ENCODE measurements at regions of chr1 and their contacts with region 1.

Region 1: GRCh38 chr1:32228771-32229170 is 6.6 kb downstream of the EIF3I start:
- DNase-seq: no peak
- H3K4me3 Mint-ChIP-seq: no peak overlapping the region
- H3K27ac Mint-ChIP-seq: no peak overlapping the region
- H3K4me1 Mint-ChIP-seq: peaks cover 19% of the 10 kb centered on the region
- H3K27me3 Mint-ChIP-seq: no peaks in the 10 kb centered on the region

Region 2: DNA sequence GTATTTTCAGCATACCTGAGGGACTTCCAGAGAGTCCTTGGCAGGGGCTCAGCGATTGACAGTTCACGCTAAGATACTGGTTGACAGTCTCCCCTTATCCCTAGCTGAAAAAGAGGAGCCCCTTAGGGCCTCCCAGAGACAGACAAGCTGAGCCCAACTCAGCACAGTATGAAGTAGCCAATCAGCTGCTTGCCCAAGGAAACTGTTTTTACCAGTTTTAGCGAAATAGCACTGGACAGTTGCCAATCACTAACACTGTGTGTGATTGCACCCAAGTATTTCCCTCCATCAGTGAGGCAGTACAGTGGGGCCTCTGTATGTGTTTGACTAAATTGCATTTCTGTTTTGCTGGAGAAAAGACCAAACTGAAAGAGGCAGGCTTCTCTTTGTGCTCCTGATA is 188.1 kb before region 1 on chr1:
- CTCF ChIA-PET with region 1: no interaction called
- intact Hi-C with region 1: no loop called
- DNase-seq: no peak
- H3K4me3 Mint-ChIP-seq: no peak overlapping the region
- H3K27ac Mint-ChIP-seq: peak overlapping the region; percentile 53
- H3K4me1 Mint-ChIP-seq: peaks cover 3% of the 10 kb centered on the region
- H3K27me3 Mint-ChIP-seq: no peaks in the 10 kb centered on the region

Region 3: GRCh38 chr1:32240140-32240951 is 11.6 kb after region 1 on chr1:
- CTCF ChIA-PET with region 1: interaction called, 13 read pairs
- intact Hi-C with region 1: no loop called
- DNase-seq: peak; percentile 72
- H3K4me3 Mint-ChIP-seq: peak overlapping the region; percentile 82
- H3K27ac Mint-ChIP-seq: peak overlapping the region; percentile 50
- H3K4me1 Mint-ChIP-seq: peaks cover 23% of the 10 kb centered on the region
- H3K27me3 Mint-ChIP-seq: no peaks in the 10 kb centered on the region